ENCODE measurements at regions of chr12 and their contacts with region 1.

Region 1: DNA sequence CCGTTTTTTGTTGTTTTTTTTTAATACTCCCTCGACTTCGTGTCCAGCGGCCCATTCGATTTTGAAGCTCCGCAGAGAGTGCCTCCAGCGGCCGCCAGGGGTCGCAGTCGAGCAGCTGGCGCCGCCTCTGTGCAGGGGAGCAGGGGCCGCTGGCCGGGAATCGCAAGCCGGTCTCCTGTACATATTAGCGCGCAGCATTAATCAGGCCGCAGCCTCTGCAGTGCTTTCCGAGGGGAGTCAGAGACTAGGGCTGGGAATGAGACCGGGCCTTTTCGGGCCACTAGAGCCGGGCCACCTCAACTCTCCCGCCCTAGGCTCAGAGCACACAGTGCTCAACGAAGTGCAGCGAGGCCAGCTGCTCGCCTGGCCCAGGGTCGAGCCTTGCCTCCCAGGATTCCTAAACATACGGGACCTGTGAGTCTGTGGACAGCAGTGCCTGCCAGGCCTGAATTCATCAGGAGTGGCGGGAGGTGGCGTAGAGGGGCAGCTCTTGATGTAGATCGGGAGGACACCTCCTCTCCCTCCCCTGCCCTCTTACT is 81.8 kb downstream of the EMP1 start:
- DNase-seq: no peak
- H3K4me3 ChIP-seq: no peak overlapping the region
- H3K27ac ChIP-seq: no peak overlapping the region
- H3K4me1 ChIP-seq: no peaks in the 10 kb centered on the region
- H3K27me3 ChIP-seq: no peaks in the 10 kb centered on the region
- CTCF ChIP-seq: peak; percentile 83 to 91 (median 89)
- POLR2A ChIP-seq: no peak

Region 2: GRCh38 chr12:13023811-13024530 is 254.3 kb before region 1 on chr12:
- intact Hi-C with region 1: no loop called
- DNase-seq: no peak
- H3K4me3 ChIP-seq: no peak overlapping the region
- H3K27ac ChIP-seq: no peak overlapping the region
- H3K4me1 ChIP-seq: no peaks in the 10 kb centered on the region
- H3K27me3 ChIP-seq: no peaks in the 10 kb centered on the region
- CTCF ChIP-seq: no peak
- POLR2A ChIP-seq: no peak

Region 3: GRCh38 chr12:13230500-13230899 is 47.8 kb before region 1 on chr12:
- intact Hi-C with region 1: no loop called
- DNase-seq: peak in 1 of 2 donors; percentile 56
- H3K4me3 ChIP-seq: no peak overlapping the region
- H3K27ac ChIP-seq: no peak overlapping the region
- H3K4me1 ChIP-seq: no peaks in the 10 kb centered on the region
- H3K27me3 ChIP-seq: no peaks in the 10 kb centered on the region
- CTCF ChIP-seq: no peak
- POLR2A ChIP-seq: no peak

Region 4: GRCh38 chr12:13241833-13242488 is 36.4 kb before region 1 on chr12:
- intact Hi-C with region 1: no loop called
- DNase-seq: no peak
- H3K4me3 ChIP-seq: no peak overlapping the region
- H3K27ac ChIP-seq: no peak overlapping the region
- H3K4me1 ChIP-seq: no peaks in the 10 kb centered on the region
- H3K27me3 ChIP-seq: no peaks in the 10 kb centered on the region
- CTCF ChIP-seq: no peak
- POLR2A ChIP-seq: no peak

Region 5: DNA sequence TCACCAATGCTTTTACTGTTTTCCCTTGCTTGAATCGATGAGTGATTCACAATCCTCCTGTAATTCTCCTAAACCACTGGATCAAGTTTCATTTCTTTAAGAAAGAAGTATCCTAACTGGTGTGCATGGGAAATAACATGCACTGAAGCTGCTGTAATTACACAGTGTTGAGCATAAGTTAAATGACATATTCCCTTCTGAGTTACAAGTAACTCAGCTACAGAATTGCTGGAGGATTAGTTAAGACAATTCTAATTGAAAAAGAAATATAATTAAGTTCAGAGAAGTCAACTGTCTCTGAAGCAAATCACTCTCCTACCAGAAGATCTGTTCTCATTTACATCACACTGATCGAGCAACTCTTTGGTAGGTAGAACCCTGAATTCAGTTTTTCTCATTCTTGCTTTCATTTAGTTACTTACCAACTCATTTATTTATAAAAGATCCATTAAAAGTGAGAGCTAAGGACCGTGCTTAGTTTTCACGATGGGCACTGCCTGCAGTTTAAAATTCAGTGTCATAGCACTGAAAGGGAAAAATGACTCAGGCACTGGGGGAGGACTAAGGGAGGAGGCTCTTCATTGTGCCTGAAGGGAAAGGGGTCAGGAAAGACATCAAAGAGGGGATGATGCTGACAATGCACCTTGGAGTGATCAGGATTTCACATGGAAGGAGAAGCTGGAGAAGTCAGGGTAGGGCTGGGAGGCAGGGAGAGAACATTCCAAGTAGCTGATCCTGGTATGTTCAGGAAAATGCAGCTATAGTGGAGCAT is 245.4 kb after region 1 on chr12:
- intact Hi-C with region 1: loop called (anchors 10 kb)
- DNase-seq: no peak
- H3K4me3 ChIP-seq: no peak overlapping the region
- H3K27ac ChIP-seq: no peak overlapping the region
- H3K4me1 ChIP-seq: no peaks in the 10 kb centered on the region
- H3K27me3 ChIP-seq: no peaks in the 10 kb centered on the region
- CTCF ChIP-seq: no peak
- POLR2A ChIP-seq: no peak